GM10248 (cell line): ENCODE measurements at regions of chr15 and their contacts with region 1.

Region 1: DNA sequence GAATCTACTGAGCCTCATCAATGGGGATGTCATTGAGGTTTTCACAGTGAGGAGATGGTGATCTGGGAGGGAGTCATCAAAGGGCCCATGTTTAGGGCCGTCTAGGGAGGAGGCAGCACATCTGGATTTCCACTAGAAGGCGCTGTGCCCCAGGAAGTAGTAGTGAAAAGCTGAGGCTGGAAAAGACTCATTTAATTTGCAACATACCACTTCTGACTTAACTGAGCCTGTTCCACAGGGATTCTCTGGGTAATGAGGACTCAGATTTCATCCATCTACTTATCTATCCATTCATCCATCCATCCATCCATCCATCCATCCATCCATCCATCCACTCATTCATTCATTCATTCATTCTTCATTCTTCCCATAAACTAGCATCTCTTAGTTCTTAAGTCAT is 17.4 kb upstream of the SHF start:
- DNase-seq: peak; percentile 69
- CTCF ChIP-seq: peak; percentile 86

Region 2: DNA sequence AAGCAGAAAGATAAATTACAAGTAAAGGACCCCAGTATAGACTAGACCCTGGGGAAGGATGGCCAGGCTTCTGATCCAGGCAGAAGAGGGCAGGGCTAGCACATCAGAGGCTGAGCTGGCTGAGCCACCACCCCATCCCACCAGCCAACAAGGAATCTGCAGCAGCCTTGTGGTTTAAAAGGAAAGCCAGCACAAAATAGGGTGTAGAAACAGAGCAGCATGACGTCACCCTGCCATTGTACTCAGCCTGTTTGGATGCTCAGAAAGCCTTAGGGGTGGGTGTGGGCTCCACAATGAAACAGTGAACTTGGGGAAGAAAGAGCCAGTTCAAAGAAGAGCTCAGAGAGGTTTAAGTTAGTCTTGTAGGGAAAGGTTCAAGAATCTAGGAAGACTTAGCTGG is 47.2 kb before region 1 on chr15:
- CTCF ChIA-PET with region 1: interaction called, 49 read pairs
- POLR2A ChIA-PET with region 1: interaction called, 11 read pairs
- DNase-seq: no peak
- CTCF ChIP-seq: no peak

Region 3: DNA sequence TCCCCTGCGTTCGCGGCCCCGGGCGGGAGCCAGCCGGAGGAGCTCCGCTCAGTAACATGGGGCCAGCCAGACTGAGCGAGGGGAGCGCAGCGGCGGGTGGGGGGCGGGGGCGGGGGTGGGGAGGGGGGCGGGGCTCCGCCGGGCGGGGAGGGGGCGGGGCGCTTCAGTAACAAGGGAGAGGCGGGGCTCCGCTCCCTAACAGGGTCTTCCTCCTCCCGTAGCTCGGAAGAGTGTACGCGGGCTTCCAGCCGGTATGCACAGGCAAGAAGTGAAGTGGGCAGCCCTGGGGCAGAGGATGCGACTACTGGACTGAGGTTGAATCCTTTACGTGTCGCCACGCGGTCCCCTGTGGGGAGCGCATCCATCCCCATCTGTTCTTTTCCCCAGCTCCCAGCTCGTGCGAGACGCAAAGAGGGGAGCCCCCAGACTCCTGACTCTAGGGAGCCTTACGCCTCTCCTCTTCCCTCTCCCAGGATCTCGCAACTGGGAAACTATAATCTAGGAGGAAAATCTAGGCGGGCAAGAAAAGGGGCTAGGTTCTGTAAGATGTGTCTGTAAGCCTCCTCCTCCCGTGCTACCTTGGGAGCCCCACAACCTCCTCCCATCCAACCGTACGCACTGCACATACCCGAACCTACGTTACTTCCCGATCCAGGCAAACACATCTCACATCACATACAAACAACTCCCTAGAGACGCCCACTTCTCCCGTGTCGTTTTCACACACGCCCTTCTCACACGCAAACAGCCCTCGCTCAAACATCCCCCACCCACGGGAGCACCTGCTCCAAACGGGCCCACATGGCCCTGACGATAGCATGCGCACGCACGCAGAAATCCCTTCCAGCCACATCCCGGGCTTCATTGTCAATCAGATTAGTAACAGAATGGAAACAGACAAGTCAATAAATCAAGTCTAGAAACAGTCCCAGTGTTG is 17.0 kb before region 1 on chr15 and contains the start of gene SHF:
- CTCF ChIA-PET with region 1: interaction called, 16 read pairs
- POLR2A ChIA-PET with region 1: interaction called, 6 read pairs
- DNase-seq: peak; percentile 84
- CTCF ChIP-seq: no peak

Region 4: DNA sequence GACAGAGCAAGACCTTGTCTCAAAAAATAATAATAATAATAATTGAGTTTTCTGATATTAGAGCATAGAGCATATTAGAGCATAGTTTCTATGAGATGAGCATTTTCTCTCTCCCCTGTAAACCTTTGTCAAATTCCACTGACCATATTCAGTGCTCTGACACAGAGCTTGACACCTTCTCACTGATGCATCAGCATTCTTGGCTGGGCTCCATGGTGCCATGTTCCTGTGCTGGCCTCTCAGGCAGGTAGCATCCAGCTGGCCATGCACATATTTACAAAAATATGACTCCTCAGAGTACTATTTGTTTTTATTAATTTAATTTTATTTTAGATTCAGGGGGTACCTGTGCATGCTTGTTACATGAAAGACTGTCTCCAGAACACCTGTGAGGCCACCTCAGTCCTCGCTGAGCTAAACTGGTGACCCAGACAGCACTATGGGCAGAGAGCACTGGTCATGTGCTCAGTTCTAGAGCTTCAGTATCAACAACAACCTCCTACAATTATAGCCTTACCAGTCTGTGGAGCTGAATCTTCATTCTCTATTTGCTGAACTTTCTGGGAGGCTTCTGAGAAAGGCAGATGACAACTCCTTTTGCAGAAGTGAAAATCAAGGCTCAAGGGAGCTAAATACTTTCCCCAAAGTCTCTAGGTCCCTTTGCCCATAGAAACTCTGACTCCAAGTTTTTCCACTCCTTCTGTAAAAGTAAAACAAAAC is 25.2 kb after region 1 on chr15:
- CTCF ChIA-PET with region 1: interaction called, 15 read pairs
- POLR2A ChIA-PET with region 1: no interaction called
- DNase-seq: no peak
- CTCF ChIP-seq: no peak